CD4-positive, alpha-beta T cell (primary cell): ENCODE measurements at regions of chr2 and their contacts with region 1.

Region 1: DNA sequence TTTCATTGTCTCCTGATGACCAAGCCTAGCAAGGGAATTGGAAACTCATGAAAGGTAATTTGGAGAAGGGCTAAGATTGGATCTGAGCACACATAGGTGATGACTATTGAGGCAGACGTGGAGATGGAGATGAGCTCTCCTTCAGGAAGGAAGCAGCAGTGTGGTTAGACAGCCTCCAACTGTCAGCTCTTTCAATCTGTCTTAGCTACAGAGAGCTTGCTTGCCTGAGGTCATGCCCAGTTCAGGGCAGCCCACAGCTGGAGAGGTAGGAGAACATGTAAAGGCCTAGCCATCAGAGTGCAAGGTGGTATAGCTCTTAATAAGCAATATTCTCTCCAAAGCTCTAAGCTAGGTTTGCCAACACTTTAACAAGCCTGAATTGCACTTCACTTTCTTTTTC is 79.2 kb downstream of the THSD7B start:
- DNase-seq: no peak
- ATAC-seq: no peak
- H3K4me3 ChIP-seq: no peak overlapping the region
- H3K4me3 Mint-ChIP-seq: no peak overlapping the region
- H3K27ac ChIP-seq: no peak overlapping the region
- H3K27ac Mint-ChIP-seq: no peak overlapping the region
- H3K4me1 ChIP-seq: no peaks in the 10 kb centered on the region
- H3K4me1 Mint-ChIP-seq: no peaks in the 10 kb centered on the region
- H3K27me3 ChIP-seq: no peaks in the 10 kb centered on the region
- H3K27me3 Mint-ChIP-seq: peaks cover 3% of the 10 kb centered on the region
- CTCF ChIP-seq: no peak

Region 2: GRCh38 chr2:136823291-136823690 is 21.3 kb before region 1 on chr2:
- CTCF ChIA-PET with region 1: interaction called, 3 read pairs
- POLR2A ChIA-PET with region 1: no interaction called
- intact Hi-C with region 1: loop called in 1 of 2 experiments (anchors 1 kb)
- DNase-seq: no peak
- ATAC-seq: no peak
- H3K4me3 ChIP-seq: no peak overlapping the region
- H3K4me3 Mint-ChIP-seq: no peak overlapping the region
- H3K27ac ChIP-seq: no peak overlapping the region
- H3K27ac Mint-ChIP-seq: no peak overlapping the region
- H3K4me1 ChIP-seq: no peaks in the 10 kb centered on the region
- H3K4me1 Mint-ChIP-seq: no peaks in the 10 kb centered on the region
- H3K27me3 ChIP-seq: no peaks in the 10 kb centered on the region
- H3K27me3 Mint-ChIP-seq: no peaks in the 10 kb centered on the region
- CTCF ChIP-seq: no peak